ENCODE measurements at regions of chr4 and their contacts with region 1.

Region 1: DNA sequence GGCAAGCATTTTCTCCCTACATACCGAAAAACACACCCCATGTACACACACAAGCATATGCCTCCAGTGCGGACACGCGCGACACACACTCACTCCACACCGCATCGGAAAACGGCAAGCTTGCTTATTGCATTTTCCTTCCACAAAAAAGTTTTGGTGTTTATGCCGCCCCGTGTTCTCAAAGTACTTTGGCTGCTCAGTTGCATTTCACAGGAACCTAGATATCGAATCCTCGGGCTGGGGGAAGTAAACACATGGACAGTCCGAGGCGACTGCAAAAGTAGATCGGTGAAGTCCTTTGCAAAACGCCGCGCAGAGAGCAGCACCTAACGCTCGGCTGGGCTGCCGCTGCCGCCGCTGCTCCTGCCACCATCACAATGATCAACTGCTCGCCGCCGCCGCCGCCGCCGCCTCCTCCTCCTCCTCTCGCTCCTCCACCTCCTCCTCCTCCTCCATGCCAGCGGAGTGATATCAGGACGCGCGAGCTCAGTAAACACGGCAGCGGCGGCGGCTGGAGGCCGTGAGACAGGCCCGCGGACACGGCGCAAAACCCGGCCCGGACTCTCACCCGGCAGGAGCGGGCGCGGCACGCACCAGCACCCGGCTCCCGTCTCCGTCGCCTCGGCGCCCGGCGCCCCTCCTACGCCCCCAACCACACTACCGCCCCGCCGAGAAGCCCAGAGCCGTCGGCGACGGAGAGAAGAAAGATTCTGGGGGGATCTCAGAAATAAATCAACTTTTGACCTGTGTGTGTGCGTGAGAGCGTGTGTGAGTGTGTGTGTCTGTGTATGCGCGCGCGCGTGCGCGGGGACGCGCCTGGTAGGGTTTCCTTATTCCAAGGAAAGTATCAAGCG is at the start of gene MAML3:
- DNase-seq: peak; percentile 98
- H3K4me3 ChIP-seq: peak within 1 kb of the TSS; percentile 71 to 89 (median 86)
- H3K27ac ChIP-seq: peak within 1 kb of the TSS; percentile 97 to 99 (median 98)
- H3K4me1 ChIP-seq: peaks cover 0 to 34% (median 27%) of the 10 kb centered on the region in 4 donors
- H3K27me3 ChIP-seq: no peaks in the 10 kb centered on the region
- CTCF ChIP-seq: peak in 1 of 3 experiments; percentile 11
- EP300 ChIP-seq: no peak
- POLR2A ChIP-seq: peak; percentile 42
- total RNA-seq, gene MAML3: 5.0 to 8.7 (median 7.1) TPM

Region 2: DNA sequence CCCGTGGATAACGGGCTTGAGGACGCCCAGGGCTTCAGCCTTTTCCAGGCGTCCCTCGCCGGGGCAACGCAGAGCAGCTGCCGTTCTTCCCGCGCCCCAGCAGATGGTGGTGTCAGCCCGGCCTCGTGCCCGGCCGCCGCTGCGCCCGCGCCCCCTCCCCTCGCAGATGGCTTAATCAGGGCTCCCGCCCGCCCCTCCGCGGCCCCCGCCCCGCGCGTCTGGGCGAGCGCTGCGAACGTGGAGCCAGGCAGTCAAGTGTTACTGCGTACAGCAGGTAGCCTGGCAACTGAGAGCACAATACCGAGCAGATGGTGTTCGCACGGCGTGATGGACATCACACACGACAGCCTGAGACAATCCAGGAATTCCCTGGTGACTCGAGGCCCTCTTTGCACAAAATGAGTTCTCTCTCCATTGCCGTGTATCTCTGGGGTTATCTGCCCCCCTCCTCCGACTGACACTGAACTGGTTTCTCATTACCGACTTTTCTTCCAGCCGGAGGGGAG is 419.0 kb before region 1 on chr4:
- intact Hi-C with region 1: loop called (anchors 1 kb)
- DNase-seq: peak; percentile 95
- H3K4me3 ChIP-seq: peak overlapping the region; percentile 57 to 66 (median 60)
- H3K27ac ChIP-seq: peak overlapping the region; percentile 90 to 91 (median 90)
- H3K4me1 ChIP-seq: peaks cover 20 to 36% (median 32%) of the 10 kb centered on the region in 4 donors
- H3K27me3 ChIP-seq: no peaks in the 10 kb centered on the region
- CTCF ChIP-seq: peak; percentile 86 to 97 (median 92)
- EP300 ChIP-seq: no peak
- POLR2A ChIP-seq: no peak

Region 3: GRCh38 chr4:140012688-140013486 is 141.1 kb before region 1 on chr4:
- intact Hi-C with region 1: loop called (anchors 10 kb)
- DNase-seq: no peak
- H3K4me3 ChIP-seq: peak overlapping the region in 3 of 4 donors; percentile 4 to 28 (median 9)
- H3K27ac ChIP-seq: no peak overlapping the region
- H3K4me1 ChIP-seq: peaks cover 0 to 9% (median 9%) of the 10 kb centered on the region in 4 donors
- H3K27me3 ChIP-seq: no peaks in the 10 kb centered on the region
- CTCF ChIP-seq: peak; percentile 52 to 62 (median 59)
- EP300 ChIP-seq: no peak
- POLR2A ChIP-seq: no peak

Region 4: DNA sequence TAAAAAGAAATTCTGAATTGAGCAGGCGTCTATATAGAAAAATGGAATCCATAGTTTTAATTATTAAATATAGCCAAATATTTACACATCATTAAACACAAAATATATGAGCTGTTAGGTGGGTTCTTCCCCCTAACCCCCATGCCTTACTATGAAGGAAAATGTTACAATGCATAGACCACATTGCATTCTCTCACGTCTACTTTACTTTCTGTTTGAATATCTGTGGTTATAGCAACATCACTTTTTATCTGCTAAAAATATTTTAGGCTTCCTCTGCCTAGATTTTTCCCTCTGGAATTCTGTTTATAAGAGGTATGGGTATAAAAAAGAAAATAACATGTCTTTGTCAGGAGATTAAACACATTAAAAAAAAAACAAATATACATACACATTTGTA is 73.1 kb before region 1 on chr4:
- intact Hi-C with region 1: loop called (anchors 5 kb)
- DNase-seq: no peak
- H3K4me3 ChIP-seq: no peak overlapping the region
- H3K27ac ChIP-seq: peak overlapping the region in 1 of 4 donors; percentile 39
- H3K4me1 ChIP-seq: peaks cover 10 to 75% (median 61%) of the 10 kb centered on the region in 4 donors
- H3K27me3 ChIP-seq: no peaks in the 10 kb centered on the region
- CTCF ChIP-seq: no peak
- EP300 ChIP-seq: no peak
- POLR2A ChIP-seq: no peak

Measured in esophagus muscularis mucosa (tissue), 4 donors.